ENCODE measurements at regions of chr9 and their contacts with region 1.

Region 1: DNA sequence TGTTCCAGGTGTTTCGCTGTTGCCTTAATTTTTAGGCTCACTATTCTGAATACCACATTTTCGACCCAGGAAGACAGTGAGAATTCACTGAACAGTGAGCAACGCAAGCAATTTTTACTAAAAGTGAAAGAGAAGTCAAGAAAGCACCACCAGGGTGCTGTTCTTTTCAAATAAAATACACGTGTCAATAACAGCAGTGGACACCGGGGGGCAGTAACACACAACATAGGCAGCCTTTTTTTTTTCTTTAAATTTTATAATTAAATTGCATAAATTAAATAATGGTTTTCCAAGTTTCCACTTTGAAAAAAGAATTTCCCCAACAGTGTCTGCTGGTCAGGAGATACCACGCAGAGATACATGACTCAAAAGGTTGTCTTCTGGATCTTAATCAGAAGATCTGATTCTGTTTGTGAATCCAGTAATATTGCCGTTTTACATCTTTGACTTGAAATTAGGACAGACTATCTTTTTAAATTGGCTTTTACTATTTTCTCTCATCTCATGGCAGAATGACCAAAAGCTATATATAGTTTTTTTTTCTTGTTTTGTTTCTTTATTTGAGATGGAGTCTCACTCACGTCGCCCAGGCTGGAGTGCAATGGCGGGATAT is 47.1 kb upstream of the SH3GL2 start:
- DNase-seq: no peak
- ATAC-seq: peak in 1 of 8 donors; percentile 20
- H3K4me3 ChIP-seq: no peak overlapping the region
- H3K27ac ChIP-seq: no peak overlapping the region
- H3K4me1 ChIP-seq: no peaks in the 10 kb centered on the region
- H3K27me3 ChIP-seq: peaks cover 0 to 4% (median 0%) of the 10 kb centered on the region in 7 donors
- CTCF ChIP-seq: peak; percentile 31 to 69 (median 64)

Region 2: DNA sequence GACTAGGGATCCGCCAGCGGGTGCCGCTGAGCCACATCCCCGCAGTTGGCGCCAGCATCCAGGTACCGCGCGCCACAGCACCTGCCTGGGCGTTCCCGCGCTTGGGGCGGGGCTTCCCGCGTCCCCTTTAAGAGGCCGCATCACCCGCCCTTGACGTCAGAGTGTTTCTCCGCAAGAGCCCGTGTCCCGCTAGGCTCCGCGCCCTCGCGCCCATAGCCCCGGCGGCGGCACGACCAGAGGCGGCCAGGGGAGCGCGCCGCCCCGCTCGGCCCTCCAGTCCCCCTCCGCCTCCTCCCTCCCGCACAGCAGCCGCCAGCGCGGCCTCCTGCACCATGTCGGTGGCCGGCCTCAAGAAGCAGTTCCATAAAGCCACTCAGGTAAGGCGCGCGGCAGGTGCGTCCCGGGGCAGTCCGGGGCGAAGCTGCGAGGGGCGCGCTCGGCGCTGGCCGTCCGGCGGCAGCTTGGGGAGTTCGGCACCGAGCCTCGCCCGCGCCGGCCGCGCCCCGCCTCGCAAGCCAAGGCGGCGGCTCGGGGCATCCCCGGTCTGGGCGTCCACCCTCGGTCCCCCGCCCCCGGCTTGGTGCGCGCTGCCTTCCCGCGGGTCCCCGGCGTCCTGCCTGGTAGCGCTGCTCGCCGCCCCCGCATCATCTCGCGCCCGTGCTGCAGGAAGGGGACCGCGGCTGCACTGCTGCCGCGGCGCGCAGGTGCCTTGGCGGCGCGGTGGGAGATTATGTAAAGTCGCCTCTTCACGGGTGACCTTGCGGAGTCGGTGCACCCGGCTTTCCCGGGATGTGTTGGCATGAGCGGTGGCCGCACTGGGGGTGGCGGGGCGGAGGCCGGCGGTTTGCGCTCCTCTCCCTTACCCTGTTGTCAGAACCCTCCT is 47.4 kb after region 1 on chr9 and contains the start of gene SH3GL2:
- intact Hi-C with region 1: loop called in 1 of 10 experiments (anchors 2 kb)
- DNase-seq: peak in 1 of 2 donors; percentile 28
- ATAC-seq: peak; percentile 50 to 94 (median 76)
- H3K4me3 ChIP-seq: peak within 1 kb of the TSS; percentile 16 to 59 (median 53)
- H3K27ac ChIP-seq: peak within 1 kb of the TSS in 2 of 10 donors; percentile 4 to 14
- H3K4me1 ChIP-seq: peaks cover 0 to 12% (median 6%) of the 10 kb centered on the region in 9 donors
- H3K27me3 ChIP-seq: peaks cover 6 to 59% (median 39%) of the 10 kb centered on the region in 7 donors
- CTCF ChIP-seq: no peak
- total RNA-seq, gene SH3GL2: 1.1 to 14.6 (median 9.5) TPM in 9 of 10 donors, not detected in the other

Region 3: GRCh38 chr9:17789316-17789715 is 257.6 kb after region 1 on chr9:
- intact Hi-C with region 1: loop called in 1 of 10 experiments (anchors 5 kb)
- DNase-seq: no peak
- ATAC-seq: no peak
- H3K4me3 ChIP-seq: no peak overlapping the region
- H3K27ac ChIP-seq: no peak overlapping the region
- H3K4me1 ChIP-seq: no peaks in the 10 kb centered on the region
- H3K27me3 ChIP-seq: no peaks in the 10 kb centered on the region
- CTCF ChIP-seq: no peak

Region 4: DNA sequence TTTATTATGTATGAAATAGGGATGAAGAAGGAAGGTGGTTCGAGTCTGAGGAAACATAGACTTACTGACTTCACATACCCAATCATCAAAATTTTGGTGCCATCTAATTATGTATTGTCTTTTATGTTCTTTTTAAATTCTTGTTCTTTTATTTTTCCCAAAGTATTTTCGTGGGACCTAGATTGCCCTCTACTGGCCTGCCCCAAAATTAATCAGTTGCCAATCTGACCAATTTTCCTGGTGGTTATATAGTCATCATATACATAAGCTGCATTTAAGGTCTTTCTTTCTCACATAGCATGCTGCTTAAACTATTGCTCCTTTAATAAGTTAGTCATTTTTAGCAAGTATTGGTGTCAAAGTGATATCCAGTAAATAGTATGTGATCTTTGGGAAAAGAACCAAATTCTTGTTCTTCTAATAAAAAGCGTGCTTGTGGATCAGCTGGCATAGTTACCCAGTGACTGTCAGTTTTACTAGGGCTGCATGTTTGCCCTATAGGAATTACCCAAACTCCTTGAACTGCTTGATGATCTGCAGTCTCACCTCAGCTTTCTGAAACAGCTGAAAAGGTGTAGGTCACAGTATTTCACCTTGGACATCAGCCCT is 270.6 kb after region 1 on chr9:
- intact Hi-C with region 1: loop called (anchors 2 to 5 kb)
- DNase-seq: no peak
- ATAC-seq: no peak
- H3K4me3 ChIP-seq: no peak overlapping the region
- H3K27ac ChIP-seq: no peak overlapping the region
- H3K4me1 ChIP-seq: peaks cover 0 to 8% (median 0%) of the 10 kb centered on the region in 9 donors
- H3K27me3 ChIP-seq: peaks cover 0 to 22% (median 3%) of the 10 kb centered on the region in 7 donors
- CTCF ChIP-seq: peak in 7 of 9 donors; percentile 26 to 56 (median 48)

Region 5: DNA sequence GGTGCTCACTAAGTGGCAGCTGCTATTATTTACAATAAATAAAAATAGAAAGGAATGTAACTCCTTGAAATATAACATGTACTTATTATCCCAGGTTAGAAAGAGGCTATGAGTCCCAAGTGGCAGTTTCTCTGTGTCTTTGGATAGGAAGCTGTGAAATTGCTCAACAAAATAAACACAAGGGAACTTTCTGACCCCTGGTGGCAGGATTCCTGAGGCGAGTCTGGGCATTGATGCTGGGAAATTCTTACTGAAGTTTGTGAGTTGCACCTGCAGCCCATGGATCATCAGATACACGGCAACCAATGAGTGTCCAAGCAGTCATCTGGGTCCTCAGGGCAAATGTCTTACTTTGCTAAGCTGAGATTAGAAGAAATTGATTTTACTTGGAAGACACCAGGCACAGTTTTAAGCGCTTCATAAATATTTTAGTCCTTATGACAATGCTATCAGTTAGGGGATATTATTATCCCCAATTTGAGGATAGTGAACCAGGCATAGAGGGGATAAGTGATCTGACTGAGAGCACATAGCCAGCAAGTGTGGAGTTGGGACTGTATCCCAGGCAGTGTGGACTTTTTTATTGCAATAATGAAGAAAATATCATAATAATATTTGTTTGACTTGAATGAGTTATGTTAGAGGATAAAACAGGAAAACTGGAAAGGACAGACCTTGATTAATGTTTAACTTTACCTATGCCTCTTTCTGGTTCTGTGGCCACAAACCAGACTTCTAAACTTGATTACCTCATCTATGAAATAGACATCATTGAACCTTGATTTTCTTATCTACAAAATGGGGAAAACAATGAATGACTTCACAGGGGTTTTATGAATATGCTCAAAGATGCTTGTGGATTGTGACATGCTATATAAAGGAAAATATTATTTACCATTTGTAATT is 676.7 kb after region 1 on chr9:
- intact Hi-C with region 1: loop called in 7 of 10 experiments (anchors 5 to 10 kb)
- DNase-seq: peak in 1 of 2 donors; percentile 30
- ATAC-seq: peak in 1 of 8 donors; percentile 33
- H3K4me3 ChIP-seq: no peak overlapping the region
- H3K27ac ChIP-seq: no peak overlapping the region
- H3K4me1 ChIP-seq: no peaks in the 10 kb centered on the region
- H3K27me3 ChIP-seq: no peaks in the 10 kb centered on the region
- CTCF ChIP-seq: peak in 7 of 9 donors; percentile 39 to 63 (median 53)

Region 6: GRCh38 chr9:18215626-18216025 is 683.9 kb after region 1 on chr9:
- intact Hi-C with region 1: loop called in 7 of 10 experiments (anchors 5 kb)
- DNase-seq: no peak
- ATAC-seq: no peak
- H3K4me3 ChIP-seq: no peak overlapping the region
- H3K27ac ChIP-seq: no peak overlapping the region
- H3K4me1 ChIP-seq: no peaks in the 10 kb centered on the region
- H3K27me3 ChIP-seq: no peaks in the 10 kb centered on the region
- CTCF ChIP-seq: no peak

Region 7: GRCh38 chr9:19028835-19029451 is 1497.2 kb after region 1 on chr9:
- intact Hi-C with region 1: loop called in 1 of 10 experiments (anchors 10 kb)
- DNase-seq: peak in 1 of 2 donors; percentile 60
- ATAC-seq: peak in 6 of 8 donors; percentile 65 to 81 (median 74)
- H3K4me3 ChIP-seq: no peak overlapping the region
- H3K27ac ChIP-seq: no peak overlapping the region
- H3K4me1 ChIP-seq: peaks cover 0 to 12% (median 0%) of the 10 kb centered on the region in 9 donors
- H3K27me3 ChIP-seq: peaks cover 0 to 5% (median 0%) of the 10 kb centered on the region in 7 donors
- CTCF ChIP-seq: peak; percentile 60 to 86 (median 78)

Measured in heart right ventricle (tissue), 16 donors.